Astrocyte of the cerebellum (primary cell): ENCODE measurements at regions of chr7 and their contacts with region 1.

Region 1: GRCh38 chr7:73606801-73607691 is 17.3 kb downstream of the MLXIPL start:
- DNase-seq: no peak
- H3K4me3 ChIP-seq: peak overlapping the region; percentile 16
- CTCF ChIP-seq: peak; percentile 93

Region 2: GRCh38 chr7:73397521-73398281 is 209.3 kb before region 1 on chr7:
- in situ Hi-C with region 1: no loop called
- DNase-seq: no peak
- H3K4me3 ChIP-seq: peak overlapping the region; percentile 3
- CTCF ChIP-seq: no peak

Region 3: GRCh38 chr7:73522105-73522872 is 84.8 kb before region 1 on chr7 and contains the start of gene BAZ1B:
- in situ Hi-C with region 1: no loop called
- DNase-seq: peak; percentile 93
- H3K4me3 ChIP-seq: peak within 1 kb of the TSS; percentile 78
- CTCF ChIP-seq: no peak

Region 4: DNA sequence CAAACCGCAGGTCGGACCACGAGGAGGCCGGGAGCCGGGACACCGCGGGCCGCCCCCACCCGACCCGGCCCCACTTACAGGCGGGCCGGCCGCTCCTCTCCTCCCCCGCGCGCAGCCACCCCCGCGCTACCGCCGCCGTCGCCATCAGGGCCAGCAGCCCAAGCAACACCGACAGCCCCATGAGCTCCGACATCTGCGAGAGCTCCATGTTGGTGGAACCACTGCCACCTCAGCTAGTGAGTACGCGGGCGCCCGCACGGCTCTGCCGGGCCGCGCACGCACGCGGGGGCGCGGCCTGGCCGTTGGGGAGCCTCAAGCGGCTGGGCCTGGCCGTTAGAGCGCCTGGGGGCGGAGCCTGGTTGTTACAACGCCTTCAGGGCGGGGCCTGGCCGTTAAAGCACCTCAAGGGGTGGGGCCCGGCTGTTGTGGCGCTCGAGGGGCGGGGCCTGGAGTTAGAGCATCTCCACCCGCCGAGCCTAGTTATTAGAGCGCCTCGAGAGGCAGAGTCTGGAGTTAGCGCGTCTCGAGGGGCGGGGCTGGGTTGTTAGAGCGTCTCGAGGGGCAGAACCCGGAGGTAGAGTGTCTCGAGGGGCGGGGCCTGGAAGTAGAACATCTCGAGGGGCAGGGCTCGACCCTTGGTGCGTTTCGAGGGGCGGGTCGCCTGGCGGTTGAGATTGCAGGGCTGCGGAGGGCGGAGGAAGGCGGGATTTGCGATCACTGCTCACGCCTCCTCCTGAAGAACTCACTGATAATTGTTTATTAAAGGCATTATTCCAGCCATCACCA is 28.5 kb before region 1 on chr7 and contains the start of gene TBL2:
- in situ Hi-C with region 1: no loop called
- DNase-seq: peak; percentile 97
- H3K4me3 ChIP-seq: peak within 1 kb of the TSS; percentile 94
- CTCF ChIP-seq: peak; percentile 16

Region 5: GRCh38 chr7:73842247-73842895 is 235.3 kb after region 1 on chr7 and contains the start of gene METTL27:
- in situ Hi-C with region 1: loop called (anchors 25 kb)
- DNase-seq: peak; percentile 81
- H3K4me3 ChIP-seq: peak within 1 kb of the TSS; percentile 67
- CTCF ChIP-seq: no peak